RWPE1 (cell line): ENCODE measurements at regions of chr19 and their contacts with region 1.

Region 1: GRCh38 chr19:4636151-4636717 is 3.1 kb upstream of the TNFAIP8L1 start:
- DNase-seq: peak; percentile 57
- H3K27ac ChIP-seq: peak overlapping the region; percentile 85
- CTCF ChIP-seq: peak; percentile 96

Region 2: DNA sequence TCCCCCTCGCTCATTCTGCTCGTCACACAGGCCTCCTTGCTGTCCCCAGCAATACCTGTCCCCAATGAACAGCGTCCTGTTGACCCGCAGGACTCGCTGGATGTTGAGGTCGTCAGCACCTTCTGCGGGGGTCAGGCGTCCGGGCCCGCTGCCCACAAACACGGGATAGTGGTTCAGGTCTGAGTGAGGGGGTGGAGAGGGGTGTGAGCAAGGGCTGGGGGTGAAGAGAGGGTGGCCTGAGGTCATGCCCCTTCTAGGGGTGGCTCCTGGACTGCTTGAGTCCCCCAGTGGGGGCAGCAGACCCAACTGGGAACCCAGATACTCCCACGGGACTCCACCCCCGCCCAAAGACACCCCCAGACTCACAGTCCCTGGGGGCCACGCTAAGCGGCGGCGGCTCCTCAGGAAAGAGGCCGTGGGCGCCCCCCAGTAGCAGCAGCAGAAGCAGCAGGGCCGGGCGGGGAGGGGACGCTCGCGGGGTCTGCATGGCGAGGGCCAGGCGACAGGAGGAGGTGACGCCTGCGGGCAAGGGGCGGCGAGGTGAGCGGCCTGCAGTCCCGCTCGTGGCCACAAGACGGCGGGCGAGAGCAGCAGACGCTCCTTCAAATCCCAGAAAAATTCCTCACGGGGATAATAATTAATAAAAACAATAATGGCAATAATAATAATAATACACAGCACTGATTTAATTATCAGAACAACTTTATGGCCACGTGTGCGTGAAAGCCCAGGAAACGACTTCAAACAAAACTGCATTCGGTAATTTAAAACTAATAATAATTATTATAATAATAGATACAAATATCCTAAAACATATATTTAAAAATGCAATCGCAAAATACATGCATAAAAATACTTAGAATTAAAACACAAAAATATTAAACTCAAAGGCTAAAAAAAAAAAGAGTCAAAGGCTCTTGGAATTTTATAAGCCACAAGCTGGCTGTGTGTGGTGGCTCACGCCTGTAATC is 78.0 kb before region 1 on chr19:
- CTCF ChIA-PET with region 1: interaction called, 14 read pairs
- POLR2A ChIA-PET with region 1: no interaction called
- DNase-seq: no peak
- H3K27ac ChIP-seq: no peak overlapping the region
- CTCF ChIP-seq: peak; percentile 98

Region 3: DNA sequence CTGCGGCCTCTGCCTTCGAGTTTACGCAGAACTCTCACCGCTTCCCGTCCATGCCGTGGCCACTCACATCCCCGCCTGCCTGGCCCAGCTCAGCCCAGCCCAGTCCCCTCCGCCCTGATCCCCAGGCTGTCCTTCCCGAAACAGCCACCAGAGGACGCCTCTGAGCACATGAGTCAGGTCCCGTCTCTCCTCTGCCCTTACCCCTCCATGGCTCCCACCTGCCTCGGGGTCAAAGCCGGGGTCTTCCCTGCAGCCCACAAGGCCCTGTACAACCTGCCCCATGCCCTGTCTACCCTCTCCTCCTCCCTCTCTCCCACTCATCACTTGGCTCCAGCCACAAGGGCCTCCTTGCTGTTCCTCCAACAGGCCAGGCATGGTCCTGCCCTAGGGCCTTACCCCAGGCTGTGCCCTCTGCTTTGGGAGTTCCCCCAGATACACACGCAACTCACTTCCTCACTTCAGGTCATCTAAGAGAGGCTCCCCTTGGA is 68.6 kb before region 1 on chr19:
- CTCF ChIA-PET with region 1: interaction called, 36 read pairs
- POLR2A ChIA-PET with region 1: no interaction called
- DNase-seq: no peak
- H3K27ac ChIP-seq: peak overlapping the region; percentile 9; the same call in 1 of the 2 replicates
- CTCF ChIP-seq: peak; percentile 83

Region 4: DNA sequence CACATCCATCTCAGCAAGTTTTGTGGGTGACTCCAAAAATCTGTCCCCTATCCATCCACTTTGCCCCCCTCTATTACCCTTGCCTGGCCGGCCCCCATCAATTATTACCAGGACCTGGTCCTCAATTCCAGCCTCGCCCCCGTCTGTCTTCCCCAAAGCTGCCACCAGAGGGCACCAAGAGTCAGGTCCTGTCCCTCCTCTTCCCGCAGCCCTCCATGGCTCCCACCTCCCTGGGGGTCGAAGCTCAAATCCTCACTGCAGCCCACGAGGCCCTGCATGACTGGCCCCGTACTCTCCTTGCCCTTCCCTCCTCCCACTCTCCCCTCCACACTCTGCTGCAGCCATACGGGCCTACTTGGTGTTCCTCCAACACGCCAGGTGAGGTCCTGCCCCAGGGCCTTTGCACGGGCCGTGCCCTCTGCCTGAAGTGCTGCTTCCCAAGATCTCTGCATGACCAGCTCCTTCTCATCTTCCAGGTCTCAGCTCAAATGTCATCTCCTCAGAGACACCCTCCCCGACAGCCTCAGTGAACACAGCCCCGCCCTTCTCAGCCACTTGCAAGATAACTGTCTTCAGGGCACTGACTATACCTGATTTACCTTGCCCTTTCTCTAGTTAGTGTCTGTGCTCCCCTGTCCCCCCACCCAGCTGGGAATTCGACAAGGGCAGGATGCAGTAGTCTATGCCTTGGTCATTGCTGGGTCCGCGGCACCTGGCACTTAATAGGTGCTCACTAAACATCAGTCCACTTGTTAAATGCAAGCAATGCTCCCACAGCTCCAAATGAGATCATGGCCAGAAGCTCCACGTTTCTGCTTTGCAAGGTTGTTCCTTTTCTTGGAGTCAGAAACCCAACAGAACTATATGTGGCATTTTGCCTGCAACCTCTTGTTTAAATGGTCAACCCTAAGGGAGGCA is 60.0 kb before region 1 on chr19:
- CTCF ChIA-PET with region 1: interaction called, 19 read pairs
- POLR2A ChIA-PET with region 1: no interaction called
- DNase-seq: no peak
- H3K27ac ChIP-seq: peak overlapping the region; percentile 61
- CTCF ChIP-seq: peak; percentile 75